ENCODE measurements at regions of chr5 and their contacts with region 1.

Region 1: DNA sequence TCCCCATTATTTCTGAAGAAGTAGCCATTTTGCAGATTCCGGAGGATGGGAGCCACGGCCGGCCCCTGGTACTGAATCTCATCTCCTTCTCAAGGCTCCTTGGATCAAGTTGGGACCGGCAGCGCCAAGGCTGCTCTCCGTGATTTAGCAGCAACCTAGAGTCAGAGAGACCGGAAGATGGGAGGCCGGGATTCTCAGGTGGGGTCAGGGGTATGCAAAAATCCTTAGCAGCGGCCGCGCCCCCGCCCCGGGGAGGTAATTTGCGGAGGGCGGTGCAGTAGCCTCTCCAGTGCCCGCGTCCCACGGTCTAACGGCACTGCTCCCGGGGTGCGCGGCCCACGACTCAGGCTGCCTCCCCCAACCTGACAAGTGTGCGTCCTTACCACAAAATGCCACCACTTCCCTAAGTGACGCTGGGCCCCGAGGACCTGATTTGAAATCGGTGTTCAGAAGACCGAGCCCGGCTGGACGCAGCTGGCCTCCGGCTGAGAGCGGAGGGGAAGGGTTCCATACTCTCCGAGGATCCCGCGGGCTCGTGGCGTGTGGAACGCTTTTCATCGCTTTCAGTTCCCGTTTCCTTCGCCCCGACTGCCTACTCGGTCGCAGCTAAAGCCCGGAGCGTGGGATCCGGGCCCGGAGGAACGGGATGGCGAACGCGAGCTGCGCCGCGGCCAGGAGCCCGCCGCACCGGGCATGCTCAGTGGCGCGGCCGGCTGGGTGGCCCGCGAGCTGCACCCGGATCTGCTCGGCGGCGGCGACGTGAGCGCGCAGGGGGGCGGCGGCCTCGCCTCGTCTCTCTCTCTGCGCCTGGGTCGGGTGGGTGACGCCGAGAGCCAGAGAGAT is at the start of gene SCAMP1:
- DNase-seq: peak; percentile 83 to 87
- ATAC-seq: peak; percentile 88 to 89
- H3K4me3 ChIP-seq: peak within 1 kb of the TSS; percentile 81 to 100 (median 99)
- H3K27ac ChIP-seq: peak within 1 kb of the TSS; percentile 89 to 95 (median 92)
- H3K4me1 ChIP-seq: peaks cover 24 to 26% of the 10 kb centered on the region in 2 donors
- H3K27me3 ChIP-seq: no peaks in the 10 kb centered on the region
- CTCF ChIP-seq: peak in 4 of 5 experiments; percentile 47 to 69 (median 64)
- POLR2A ChIP-seq: peak; percentile 76 to 79
- total RNA-seq, gene SCAMP1: 17.5 to 35.2 (median 22.0) TPM

Region 2: GRCh38 chr5:78377056-78377717 is 17.1 kb after region 1 on chr5:
- in situ Hi-C with region 1: no loop called
- intact Hi-C with region 1: loop called (anchors 2 kb)
- DNase-seq: peak; percentile 20 to 27
- ATAC-seq: peak; percentile 84 to 89
- H3K4me3 ChIP-seq: peak overlapping the region in 2 of 4 donors; percentile 1 to 18
- H3K27ac ChIP-seq: peak overlapping the region; percentile 55 to 75 (median 62)
- H3K4me1 ChIP-seq: peaks cover 26 to 43% of the 10 kb centered on the region in 2 donors
- H3K27me3 ChIP-seq: no peaks in the 10 kb centered on the region
- CTCF ChIP-seq: no peak
- POLR2A ChIP-seq: no peak

Region 3: GRCh38 chr5:78504704-78505677 is 144.9 kb after region 1 on chr5:
- in situ Hi-C with region 1: no loop called
- intact Hi-C with region 1: loop called (anchors 2 kb)
- DNase-seq: peak; percentile 84 to 93
- ATAC-seq: peak; percentile 99
- H3K4me3 ChIP-seq: no peak overlapping the region
- H3K27ac ChIP-seq: peak overlapping the region; percentile 57 to 67 (median 62)
- H3K4me1 ChIP-seq: peaks cover 28% of the 10 kb centered on the region in 2 donors
- H3K27me3 ChIP-seq: no peaks in the 10 kb centered on the region
- CTCF ChIP-seq: no peak
- POLR2A ChIP-seq: no peak

Region 4: DNA sequence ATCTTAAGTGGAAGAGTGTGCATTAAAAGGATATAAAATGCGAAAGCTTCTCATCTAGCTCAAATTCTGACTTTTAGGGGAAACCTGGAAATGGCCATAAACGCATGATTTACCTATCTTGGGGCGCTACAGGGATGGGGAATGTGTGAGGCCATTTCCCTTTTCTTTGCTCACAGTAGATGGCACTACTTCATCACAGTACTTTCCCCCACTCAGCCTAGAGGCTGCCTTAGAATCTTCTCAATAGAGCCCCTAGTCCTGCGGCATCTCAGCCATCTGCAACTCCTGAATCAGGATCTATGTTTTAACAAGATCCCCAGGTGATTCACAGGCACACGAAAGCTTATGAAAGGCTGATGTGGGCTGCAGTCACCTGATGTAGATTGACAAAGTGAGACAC is 177.8 kb after region 1 on chr5:
- in situ Hi-C with region 1: no loop called
- intact Hi-C with region 1: no loop called
- DNase-seq: no peak
- ATAC-seq: peak; percentile 53 to 78
- H3K4me3 ChIP-seq: no peak overlapping the region
- H3K27ac ChIP-seq: no peak overlapping the region
- H3K4me1 ChIP-seq: no peaks in the 10 kb centered on the region
- H3K27me3 ChIP-seq: no peaks in the 10 kb centered on the region
- CTCF ChIP-seq: peak in 4 of 5 experiments; percentile 28 to 62 (median 45)
- POLR2A ChIP-seq: no peak

Region 5: GRCh38 chr5:78984439-78985115 is 624.5 kb after region 1 on chr5:
- in situ Hi-C with region 1: no loop called
- intact Hi-C with region 1: loop called (anchors 10 kb)
- DNase-seq: peak; percentile 53 to 77
- ATAC-seq: peak; percentile 83 to 87
- H3K4me3 ChIP-seq: peak overlapping the region; percentile 68 to 91 (median 78)
- H3K27ac ChIP-seq: peak overlapping the region; percentile 82 to 92 (median 88)
- H3K4me1 ChIP-seq: peaks cover 11 to 16% of the 10 kb centered on the region in 2 donors
- H3K27me3 ChIP-seq: no peaks in the 10 kb centered on the region
- CTCF ChIP-seq: peak; percentile 20 to 50 (median 40)
- POLR2A ChIP-seq: peak; percentile 53 to 56